Ascending aorta (tissue), 2 donors: ENCODE measurements at regions of chr7 and their contacts with region 1.

Region 1: GRCh38 chr7:149497456-149498261 is at the start of gene ZNF746:
- DNase-seq: peak; percentile 28 to 88
- H3K4me3 ChIP-seq: peak within 1 kb of the TSS; percentile 84 to 92
- H3K27ac ChIP-seq: peak within 1 kb of the TSS; percentile 87 to 89
- H3K4me1 ChIP-seq: peaks cover 6 to 11% of the 10 kb centered on the region in 2 donors
- H3K27me3 ChIP-seq: no peaks in the 10 kb centered on the region
- CTCF ChIP-seq: peak in 2 of 3 experiments; percentile 38 to 77
- total RNA-seq, gene ZNF746: 27.5 TPM

Region 2: DNA sequence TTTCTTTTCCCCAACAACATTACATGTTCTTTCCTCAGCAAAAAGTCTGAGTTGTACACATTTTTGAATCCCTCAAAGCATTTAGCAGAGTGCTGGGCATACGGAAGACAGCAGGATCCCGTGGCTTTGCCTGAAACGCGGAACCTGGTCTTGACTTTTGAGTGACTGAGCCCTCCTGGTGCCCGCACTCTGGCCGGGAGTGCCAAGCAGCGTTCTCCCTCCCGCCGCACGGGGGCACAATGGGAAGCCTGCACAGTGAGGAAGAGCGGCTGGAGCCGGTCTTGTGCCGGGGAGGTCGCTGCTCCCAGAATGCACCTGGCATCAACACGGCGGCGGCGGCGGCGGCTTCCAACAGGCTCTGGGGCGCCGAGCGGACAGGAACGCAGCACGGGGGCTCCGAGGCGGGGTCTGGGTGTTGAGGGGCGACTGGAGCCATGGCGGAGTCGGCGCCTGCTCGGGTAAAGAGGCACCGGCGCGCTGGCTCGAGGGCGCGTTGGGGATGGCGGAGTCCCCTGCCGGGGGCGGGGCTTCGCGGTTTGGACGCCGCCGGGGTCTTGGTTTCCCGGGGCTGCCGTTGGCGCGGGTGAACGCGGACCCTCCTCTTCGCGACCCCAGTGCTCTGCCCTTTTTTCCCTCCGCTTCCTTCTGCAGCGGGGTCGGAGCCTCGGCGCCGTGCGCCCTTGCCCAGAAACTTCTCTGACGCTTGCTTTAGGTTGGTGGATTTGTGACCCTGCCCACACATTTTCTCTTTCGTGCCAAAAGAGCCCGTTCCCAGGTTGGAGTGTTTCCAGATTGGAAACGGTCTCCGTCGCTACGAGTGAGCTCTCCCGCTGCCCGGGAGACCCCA is 258.1 kb before region 1 on chr7 and contains the start of gene ZNF212:
- intact Hi-C with region 1: loop called (anchors 10 kb)
- DNase-seq: peak; percentile 62 to 95
- H3K4me3 ChIP-seq: peak within 1 kb of the TSS; percentile 84 to 95
- H3K27ac ChIP-seq: peak within 1 kb of the TSS; percentile 42 to 61
- H3K4me1 ChIP-seq: peaks cover 6 to 12% of the 10 kb centered on the region in 2 donors
- H3K27me3 ChIP-seq: no peaks in the 10 kb centered on the region
- CTCF ChIP-seq: peak; percentile 73 to 89 (median 78)
- total RNA-seq, gene ZNF212: 5.2 TPM

Region 3: GRCh38 chr7:149261829-149262617 is 235.6 kb before region 1 on chr7 and contains the start of gene ZNF783:
- intact Hi-C with region 1: loop called (anchors 5 kb)
- DNase-seq: peak; percentile 44 to 93
- H3K4me3 ChIP-seq: peak within 1 kb of the TSS; percentile 72 to 91
- H3K27ac ChIP-seq: peak within 1 kb of the TSS; percentile 86 to 95
- H3K4me1 ChIP-seq: peaks cover 3 to 12% of the 10 kb centered on the region in 2 donors
- H3K27me3 ChIP-seq: no peaks in the 10 kb centered on the region
- CTCF ChIP-seq: peak; percentile 49 to 93 (median 67)
- total RNA-seq, gene ZNF783: 25.7 TPM

Region 4: DNA sequence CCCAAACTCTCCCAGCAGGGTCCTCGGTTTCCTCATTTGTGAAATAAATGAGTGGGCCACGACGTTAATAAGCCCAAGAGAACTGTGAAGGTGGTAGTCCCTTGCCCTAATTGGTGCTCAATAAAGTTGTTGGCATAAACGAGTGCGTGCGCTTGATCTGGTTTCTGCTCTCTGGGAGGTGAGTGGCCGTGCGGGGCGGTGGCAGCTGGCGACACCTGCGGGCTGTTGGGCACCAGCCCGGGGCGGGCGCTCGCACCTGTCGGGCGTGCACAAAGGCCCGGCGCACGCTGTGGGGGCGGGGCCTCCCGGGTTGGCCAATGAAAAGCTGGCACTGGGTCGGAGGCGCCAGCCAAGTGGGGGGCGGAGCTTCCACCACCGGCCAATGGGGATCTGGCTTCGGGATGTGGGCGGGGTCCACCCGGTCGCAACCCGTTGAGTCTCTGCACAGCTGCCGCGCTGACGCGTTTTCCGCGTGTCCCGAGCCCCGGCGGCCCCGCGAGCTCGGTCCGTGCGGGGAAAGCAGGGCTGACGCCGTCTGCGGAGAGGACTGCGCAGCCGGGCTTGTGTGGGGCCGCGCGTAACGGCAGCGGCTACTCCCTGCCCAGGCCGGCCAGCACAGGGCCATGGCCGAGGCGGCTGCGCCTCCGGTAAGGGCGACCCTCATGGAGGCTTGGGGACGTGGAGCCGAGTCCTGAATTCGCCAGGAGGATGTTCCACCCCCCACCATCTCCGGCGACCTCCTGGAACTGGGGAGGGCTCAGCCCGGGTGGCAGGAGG is 212.6 kb before region 1 on chr7:
- intact Hi-C with region 1: loop called (anchors 10 kb)
- DNase-seq: peak; percentile 79 to 96
- H3K4me3 ChIP-seq: peak overlapping the region; percentile 66 to 88
- H3K27ac ChIP-seq: peak overlapping the region; percentile 20 to 48
- H3K4me1 ChIP-seq: peaks cover 3 to 14% of the 10 kb centered on the region in 2 donors
- H3K27me3 ChIP-seq: no peaks in the 10 kb centered on the region
- CTCF ChIP-seq: no peak

Region 5: GRCh38 chr7:149422129-149422913 is 75.3 kb before region 1 on chr7:
- intact Hi-C with region 1: loop called (anchors 2 kb)
- DNase-seq: no peak
- H3K4me3 ChIP-seq: peak overlapping the region; percentile 50 to 64
- H3K27ac ChIP-seq: no peak overlapping the region
- H3K4me1 ChIP-seq: peaks cover 0 to 3% of the 10 kb centered on the region in 2 donors
- H3K27me3 ChIP-seq: no peaks in the 10 kb centered on the region
- CTCF ChIP-seq: peak in 2 of 3 experiments; percentile 35 to 77

Region 6: GRCh38 chr7:149460493-149461277 is 37.0 kb before region 1 on chr7 and contains the start of gene ZNF777:
- intact Hi-C with region 1: loop called (anchors 2 kb)
- DNase-seq: peak in 1 of 2 donors; percentile 88
- H3K4me3 ChIP-seq: peak within 1 kb of the TSS; percentile 85 to 99
- H3K27ac ChIP-seq: peak within 1 kb of the TSS; percentile 77 to 86
- H3K4me1 ChIP-seq: peaks cover 3 to 9% of the 10 kb centered on the region in 2 donors
- H3K27me3 ChIP-seq: no peaks in the 10 kb centered on the region
- CTCF ChIP-seq: peak; percentile 28 to 50 (median 38)
- total RNA-seq, gene ZNF777: 13.4 TPM

Region 7: DNA sequence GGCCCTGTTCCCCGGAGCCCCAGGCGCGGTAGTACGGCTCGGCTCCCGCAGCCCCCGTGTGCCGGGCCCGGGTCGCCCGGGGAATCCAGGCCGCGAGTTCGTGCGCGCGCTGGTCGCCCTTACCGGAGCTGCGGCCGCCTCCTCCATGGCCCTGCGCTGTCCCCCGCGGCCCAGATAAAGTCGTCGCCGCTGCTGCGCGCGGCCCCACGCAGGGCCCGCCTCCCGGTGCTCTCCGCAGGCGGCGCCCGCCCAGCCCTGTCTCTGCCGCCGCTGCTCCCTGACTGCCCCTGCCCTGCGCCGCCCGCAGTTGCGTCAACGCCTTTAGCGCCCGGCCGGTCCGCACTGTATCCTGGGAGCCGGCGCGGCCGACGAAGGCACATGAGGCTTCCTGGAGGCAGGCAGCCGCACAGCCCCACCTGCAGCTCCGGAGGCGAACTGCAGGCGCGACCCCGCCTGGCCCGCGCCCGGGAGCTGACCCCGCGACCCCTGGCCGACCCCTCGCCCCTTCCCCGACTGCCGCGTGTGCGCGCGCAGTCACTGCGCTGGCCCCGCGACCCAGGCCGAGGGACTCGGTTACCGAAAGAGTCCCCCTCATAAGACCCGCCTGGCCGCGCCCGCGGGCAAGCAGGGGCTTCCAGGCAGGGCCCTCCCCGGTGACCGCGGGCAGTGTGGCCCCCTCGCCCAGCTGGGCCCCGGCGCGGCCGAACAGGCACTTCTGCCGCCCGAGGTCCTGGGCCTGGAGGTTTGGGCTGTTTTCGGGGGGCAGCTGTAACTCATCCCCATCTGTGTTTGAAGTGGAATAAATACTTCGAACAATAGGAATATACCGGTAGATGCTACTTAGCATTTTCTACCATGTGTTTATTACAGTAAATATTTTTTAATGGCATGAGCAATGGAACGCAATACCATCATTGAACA is 127.0 kb after region 1 on chr7:
- intact Hi-C with region 1: loop called (anchors 2 kb)
- DNase-seq: peak; percentile 77 to 97
- H3K4me3 ChIP-seq: peak overlapping the region; percentile 91 to 98
- H3K27ac ChIP-seq: peak overlapping the region; percentile 84 to 90
- H3K4me1 ChIP-seq: peaks cover 0 to 7% of the 10 kb centered on the region in 2 donors
- H3K27me3 ChIP-seq: no peaks in the 10 kb centered on the region
- CTCF ChIP-seq: peak; percentile 92 to 98 (median 93)